WTC11 (cell line): ENCODE measurements at regions of chr20 and their contacts with region 1.

Region 1: DNA sequence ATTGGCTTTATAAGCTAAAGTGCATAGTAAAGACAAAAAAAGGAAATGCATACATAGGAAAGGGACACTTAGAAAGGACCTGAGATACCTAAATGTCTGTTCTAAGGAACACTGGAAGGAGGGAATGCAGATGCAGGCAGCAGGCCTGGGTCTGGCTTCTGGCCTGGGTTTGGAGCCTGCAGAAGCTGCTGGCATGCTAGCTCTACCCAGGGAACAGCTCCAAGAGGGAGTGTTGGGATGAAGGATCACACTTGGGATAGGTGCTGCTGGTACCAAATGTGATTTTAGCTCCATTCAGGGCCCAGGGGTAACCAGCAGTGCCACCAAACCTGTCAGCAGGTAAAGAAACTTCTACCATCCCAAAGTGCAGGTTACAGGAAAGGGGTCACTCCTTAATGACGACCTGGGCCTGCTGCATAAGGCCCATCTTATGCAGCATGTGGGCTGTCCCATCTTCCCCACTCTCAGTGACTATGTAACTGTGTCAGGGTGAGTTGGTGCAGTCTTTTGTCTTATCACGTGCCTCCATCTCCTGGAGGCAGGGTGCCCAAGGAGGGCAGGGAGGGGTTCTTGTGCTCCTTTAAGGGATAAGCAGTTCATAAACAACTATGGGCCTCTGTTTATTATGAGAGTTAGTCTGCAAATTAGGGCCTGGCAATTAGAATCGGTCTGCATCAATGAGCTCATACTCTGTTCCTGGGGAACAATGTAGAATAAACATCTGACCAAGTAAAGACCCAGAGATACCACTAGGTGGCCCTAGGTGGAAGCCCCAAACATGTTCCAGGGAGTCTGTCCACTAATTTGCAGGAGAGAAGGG is 26.9 kb downstream of the DDX27 start:
- DNase-seq: no peak
- ATAC-seq: peak; percentile 93
- H3K4me3 Mint-ChIP-seq: no peak overlapping the region
- H3K27ac Mint-ChIP-seq: peak overlapping the region; percentile 87
- H3K4me1 Mint-ChIP-seq: no peaks in the 10 kb centered on the region
- H3K27me3 Mint-ChIP-seq: no peaks in the 10 kb centered on the region
- CTCF ChIP-seq: peak; percentile 76

Region 2: DNA sequence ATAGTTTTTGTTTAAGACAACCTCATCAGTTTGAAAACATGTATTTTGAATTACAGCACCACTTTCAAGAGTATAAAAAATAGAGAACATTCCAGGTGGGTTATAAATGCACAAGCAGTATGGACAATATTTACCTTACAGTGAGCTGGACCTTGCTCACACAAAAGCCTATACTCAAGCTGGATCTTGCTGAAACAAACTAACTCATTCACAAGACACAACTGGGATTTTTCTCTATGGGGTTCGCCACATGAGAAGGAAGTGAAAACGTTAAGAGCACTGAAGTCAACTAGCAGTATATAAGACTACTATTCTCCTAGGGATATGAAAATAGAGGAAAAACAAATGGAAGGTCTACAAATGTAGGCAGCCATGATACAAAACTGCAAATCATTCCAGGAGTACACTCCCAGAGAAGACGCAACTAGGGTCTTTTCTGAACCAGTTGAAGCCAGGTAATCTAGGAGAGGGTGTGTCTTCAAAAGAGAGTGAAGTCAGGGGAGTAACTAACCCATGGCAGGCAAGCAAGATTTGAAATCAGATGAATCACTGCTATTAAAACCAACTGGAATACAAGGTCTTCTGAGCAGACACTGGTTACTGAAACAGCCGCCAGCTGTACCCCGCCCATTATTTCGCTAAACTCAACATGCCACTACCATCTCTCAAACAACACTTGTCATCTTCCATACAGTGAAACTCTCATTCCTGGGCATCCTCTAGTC is 84.5 kb before region 1 on chr20:
- CTCF ChIA-PET with region 1: no interaction called
- POLR2A ChIA-PET with region 1: no interaction called
- DNase-seq: no peak
- ATAC-seq: no peak
- H3K4me3 Mint-ChIP-seq: no peak overlapping the region
- H3K27ac Mint-ChIP-seq: no peak overlapping the region
- H3K4me1 Mint-ChIP-seq: no peaks in the 10 kb centered on the region
- H3K27me3 Mint-ChIP-seq: no peaks in the 10 kb centered on the region
- CTCF ChIP-seq: no peak

Region 3: GRCh38 chr20:49186535-49187329 is 59.4 kb before region 1 on chr20:
- CTCF ChIA-PET with region 1: no interaction called
- POLR2A ChIA-PET with region 1: no interaction called
- DNase-seq: no peak
- ATAC-seq: no peak
- H3K4me3 Mint-ChIP-seq: peak overlapping the region; percentile 91
- H3K27ac Mint-ChIP-seq: peak overlapping the region; percentile 50
- H3K4me1 Mint-ChIP-seq: peaks cover 37% of the 10 kb centered on the region
- H3K27me3 Mint-ChIP-seq: no peaks in the 10 kb centered on the region; the same call in 1 of the 2 replicates
- CTCF ChIP-seq: no peak

Region 4: DNA sequence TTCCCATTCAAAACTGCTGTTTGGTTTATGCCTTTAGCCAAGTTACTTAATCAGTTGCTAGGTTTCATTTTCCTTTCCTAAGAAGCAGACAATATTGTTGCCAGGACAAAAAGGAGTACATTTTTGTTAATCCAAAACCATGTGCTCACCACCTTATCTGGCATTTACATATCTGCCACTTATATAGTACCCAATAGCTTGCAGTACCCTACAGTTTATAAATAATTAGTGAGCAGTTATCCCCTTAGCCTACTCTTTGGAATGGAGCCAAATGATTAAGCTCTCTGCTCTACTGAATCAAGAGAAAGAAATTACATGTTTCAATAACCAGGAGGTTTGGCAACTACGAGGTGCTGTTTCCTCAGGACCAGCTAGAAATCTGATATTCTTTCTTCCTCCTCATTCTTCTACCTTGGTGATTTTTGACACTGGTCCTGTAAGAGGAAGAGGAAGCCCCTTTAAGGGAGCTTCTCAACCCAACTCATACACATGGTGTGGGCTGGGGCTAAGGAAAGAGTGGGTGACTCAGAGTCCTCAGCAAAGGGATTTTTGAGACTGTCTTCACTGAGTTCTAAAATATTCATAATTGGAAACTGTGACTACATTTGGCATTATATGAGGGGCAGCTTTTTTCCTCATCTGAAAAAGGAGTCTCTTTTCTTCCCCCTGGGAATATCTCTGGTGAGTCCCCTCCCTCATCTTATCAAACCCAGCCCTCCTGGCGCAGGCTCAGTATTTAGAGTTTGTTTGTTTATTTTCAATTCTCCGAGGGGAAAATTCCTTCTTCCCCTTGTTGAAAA is 30.2 kb after region 1 on chr20:
- CTCF ChIA-PET with region 1: interaction called, 11 read pairs
- POLR2A ChIA-PET with region 1: interaction called, 3 read pairs
- DNase-seq: no peak
- ATAC-seq: no peak
- H3K4me3 Mint-ChIP-seq: peak overlapping the region; percentile 100
- H3K27ac Mint-ChIP-seq: peak overlapping the region; percentile 46; the same call in 1 of the 2 replicates
- H3K4me1 Mint-ChIP-seq: peaks cover 23% of the 10 kb centered on the region
- H3K27me3 Mint-ChIP-seq: no peaks in the 10 kb centered on the region; the same call in 1 of the 2 replicates
- CTCF ChIP-seq: no peak